HAP-1 (cell line): ENCODE measurements at regions of chr9 and their contacts with region 1.

Region 1: DNA sequence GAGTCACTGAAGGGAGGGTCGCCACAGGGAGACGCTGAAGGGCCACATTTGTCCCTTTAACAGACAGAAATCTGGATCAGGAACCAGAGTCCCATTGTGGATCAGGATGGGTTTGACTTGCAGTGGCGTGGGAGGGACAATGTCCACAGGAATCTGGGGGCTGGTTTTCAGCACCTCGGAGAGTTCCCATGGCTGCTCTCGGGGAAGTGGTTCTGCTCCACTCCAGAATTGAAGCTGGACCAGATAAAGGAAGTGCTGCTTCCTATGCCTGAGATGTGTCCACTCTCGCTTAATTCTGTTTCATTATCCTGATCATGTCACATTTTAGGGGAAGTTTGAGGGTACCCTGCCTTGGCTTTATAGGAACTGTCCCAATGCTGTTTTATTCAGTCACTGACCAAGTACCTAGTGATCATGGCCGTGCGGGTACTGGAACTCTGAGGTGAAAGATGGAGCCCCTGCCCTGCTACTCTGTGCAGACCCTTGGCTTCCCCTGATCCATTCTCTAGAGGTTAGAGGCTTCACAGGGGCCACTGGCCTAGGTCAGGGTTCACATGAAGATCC is 28.7 kb downstream of the ENHO start:
- DNase-seq: peak in 1 of 2 experiments; percentile 78
- H3K4me3 ChIP-seq: no peak overlapping the region
- H3K4me1 ChIP-seq: no peaks in the 10 kb centered on the region
- H3K27me3 ChIP-seq: no peaks in the 10 kb centered on the region

Region 2: DNA sequence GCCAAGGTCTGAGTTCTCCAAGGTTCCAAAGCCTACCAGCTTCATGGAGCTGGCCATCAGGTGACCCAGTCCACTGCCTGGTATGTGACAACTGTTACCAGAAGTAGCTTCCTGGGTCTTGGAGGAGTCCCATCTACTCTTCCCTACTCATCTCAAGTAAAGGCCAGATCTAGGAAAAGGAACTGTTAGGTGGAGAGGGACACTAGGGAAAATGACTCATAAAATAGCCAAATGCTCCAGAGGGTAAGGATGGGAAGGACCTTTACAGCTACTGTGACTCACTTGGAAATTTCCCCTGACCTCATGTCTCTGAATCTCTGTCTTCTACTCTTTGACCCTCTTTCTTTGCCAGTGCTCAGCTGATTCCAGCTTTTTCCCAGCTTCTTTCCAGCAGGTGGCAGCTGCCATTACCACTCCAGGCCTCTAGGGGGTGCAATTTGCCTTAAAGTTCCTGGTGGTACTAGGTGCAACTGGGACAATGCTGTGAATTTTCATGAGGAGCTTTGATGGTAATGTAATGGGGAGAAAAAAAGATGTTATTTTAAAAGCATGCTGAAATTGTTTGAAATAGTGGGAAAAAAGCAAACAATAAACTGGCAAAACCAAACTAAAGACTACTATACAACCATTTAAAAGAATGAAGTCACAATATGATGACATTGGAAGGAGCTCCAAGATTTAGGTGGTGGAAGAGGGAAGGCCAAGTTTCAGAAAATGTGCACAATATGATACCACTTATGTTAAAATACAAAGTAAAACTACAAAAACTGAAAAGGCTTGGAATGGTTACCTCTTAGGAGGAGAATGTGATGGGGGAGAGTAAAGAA is 90.3 kb before region 1 on chr9:
- in situ Hi-C with region 1: loop called (anchors 10 kb)
- DNase-seq: peak; percentile 60 to 86
- H3K4me3 ChIP-seq: no peak overlapping the region
- H3K4me1 ChIP-seq: no peaks in the 10 kb centered on the region
- H3K27me3 ChIP-seq: no peaks in the 10 kb centered on the region

Region 3: DNA sequence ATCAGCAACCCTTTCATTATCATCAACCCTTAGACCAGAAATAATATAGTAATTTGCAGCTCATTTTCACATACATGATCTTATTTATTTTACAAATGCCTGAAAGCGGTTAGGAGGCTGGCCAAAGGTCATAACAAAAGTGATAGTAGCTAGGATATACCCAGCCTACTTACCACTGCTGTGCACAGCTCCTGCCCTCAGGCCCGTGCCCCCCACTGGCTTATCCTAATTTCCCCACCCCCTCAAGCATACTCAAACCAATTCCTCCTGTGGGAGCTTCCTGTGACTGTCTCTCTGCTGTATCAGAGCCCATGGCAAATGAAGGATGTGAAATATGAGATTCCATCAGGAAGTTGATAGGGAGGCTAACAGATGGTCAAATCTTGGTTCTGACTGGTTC is 50.5 kb before region 1 on chr9:
- in situ Hi-C with region 1: loop called (anchors 5 kb)
- DNase-seq: no peak
- H3K4me3 ChIP-seq: no peak overlapping the region
- H3K4me1 ChIP-seq: no peaks in the 10 kb centered on the region
- H3K27me3 ChIP-seq: no peaks in the 10 kb centered on the region